Right ventricle myocardium inferior (tissue), 1 donor: ENCODE measurements at regions of chr2 and their contacts with region 1.

Region 1: GRCh38 chr2:153311432-153311831 is 167.1 kb downstream of the RPRM start:
- DNase-seq: no peak
- ATAC-seq: no peak

Region 2: GRCh38 chr2:153287110-153287801 is 24.2 kb before region 1 on chr2:
- intact Hi-C with region 1: loop called (anchors 2 kb)
- DNase-seq: peak; percentile 71
- ATAC-seq: no peak

Region 3: GRCh38 chr2:153432360-153432759 is 120.9 kb after region 1 on chr2:
- intact Hi-C with region 1: no loop called
- DNase-seq: no peak
- ATAC-seq: no peak